ENCODE measurements at regions of chr15 and their contacts with region 1.

Region 1: DNA sequence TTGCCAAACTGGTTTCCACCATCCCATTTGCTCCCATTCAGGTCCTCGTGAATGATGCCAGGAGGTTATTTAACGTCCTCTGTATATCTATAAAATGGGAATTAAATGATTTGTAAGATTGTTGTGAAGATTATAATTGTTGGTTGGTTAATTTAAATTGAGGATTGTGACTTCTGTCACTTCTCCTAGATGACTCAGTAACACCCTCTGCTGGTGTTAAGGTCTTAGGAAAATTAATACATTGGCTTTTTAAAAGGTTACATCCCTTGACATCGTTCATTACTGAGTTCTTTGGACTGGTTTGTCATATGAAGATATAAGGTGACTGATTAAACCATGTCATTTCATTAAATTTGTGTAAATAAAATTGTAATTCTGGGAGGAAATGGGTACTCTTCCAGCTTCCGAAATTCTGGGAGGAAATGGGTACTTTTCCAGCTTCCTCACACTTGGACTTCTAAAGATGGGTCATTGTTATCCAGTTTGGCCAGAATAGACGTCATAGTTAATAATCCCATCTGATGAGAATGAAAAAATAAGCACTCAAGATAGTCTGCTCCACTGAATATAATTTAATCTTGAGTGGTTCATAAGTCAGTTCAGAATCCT is 33.3 kb upstream of the PAQR5 start:
- DNase-seq: no peak
- H3K4me3 ChIP-seq: no peak overlapping the region
- H3K27me3 ChIP-seq: no peaks in the 10 kb centered on the region
- CTCF ChIP-seq: peak; percentile 48

Region 2: DNA sequence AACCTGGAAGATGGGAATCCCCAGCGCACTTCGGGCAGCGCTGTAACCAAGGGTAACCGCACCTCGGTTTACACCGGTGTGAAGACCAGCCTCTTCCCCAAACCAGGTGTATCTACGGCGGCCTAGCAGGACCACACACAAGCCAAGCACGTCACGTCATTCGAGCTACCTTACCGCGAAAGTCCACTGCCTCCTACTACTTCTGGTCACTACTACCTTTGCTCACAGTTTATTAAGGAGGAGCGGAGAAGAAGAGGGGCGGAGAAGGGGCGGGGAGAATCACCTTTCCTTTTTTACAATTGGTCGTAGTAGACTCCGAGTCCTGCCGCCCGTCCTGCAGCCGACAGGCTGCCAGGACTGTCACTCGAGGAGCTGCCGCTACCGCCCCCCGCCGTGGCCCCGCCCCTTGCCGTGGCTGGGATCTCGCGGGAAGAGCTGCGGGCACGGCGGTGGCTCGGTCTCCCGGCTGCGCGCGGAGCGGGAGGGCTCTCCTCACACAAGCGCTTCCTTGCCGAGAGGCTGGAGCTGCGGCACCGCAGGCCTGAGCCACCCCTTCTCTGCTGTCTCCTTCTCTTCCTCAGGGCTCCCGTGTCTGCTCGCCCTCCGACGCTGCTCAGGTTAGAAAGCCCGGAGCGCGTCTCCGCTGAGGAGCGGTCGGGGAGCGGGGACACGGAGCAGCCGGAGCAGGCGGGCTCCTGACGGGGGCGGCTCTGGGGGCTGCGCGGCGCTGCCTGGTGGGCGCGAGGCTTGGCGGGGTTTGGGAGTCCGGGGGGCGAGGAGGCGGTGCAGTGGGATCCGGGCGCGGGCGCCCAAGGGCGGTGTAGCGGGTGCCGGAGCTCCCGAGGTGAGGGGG is 105.1 kb before region 1 on chr15 and contains the start of gene GLCE:
- CTCF ChIA-PET with region 1: interaction called, 14 read pairs
- POLR2A ChIA-PET with region 1: no interaction called
- DNase-seq: peak; percentile 73
- H3K4me3 ChIP-seq: peak within 1 kb of the TSS; percentile 85
- H3K27me3 ChIP-seq: no peaks in the 10 kb centered on the region
- CTCF ChIP-seq: no peak
- polyA plus RNA-seq, gene GLCE: 7.1 and 12.5 TPM in 2 replicates

Region 3: GRCh38 chr15:69380100-69380727 is 114.8 kb after region 1 on chr15:
- CTCF ChIA-PET with region 1: no interaction called
- POLR2A ChIA-PET with region 1: no interaction called
- DNase-seq: no peak
- H3K4me3 ChIP-seq: no peak overlapping the region
- H3K27me3 ChIP-seq: no peaks in the 10 kb centered on the region; the same call in 1 of the 2 replicates
- CTCF ChIP-seq: peak; percentile 35

Measured in BJ (cell line).